Activated CD4-positive, alpha-beta memory T cell treated with anti-CD3 and anti-CD28 coated beads for 36 hours (primary cell): ENCODE measurements at regions of chr9 and their contacts with region 1.

Region 1: DNA sequence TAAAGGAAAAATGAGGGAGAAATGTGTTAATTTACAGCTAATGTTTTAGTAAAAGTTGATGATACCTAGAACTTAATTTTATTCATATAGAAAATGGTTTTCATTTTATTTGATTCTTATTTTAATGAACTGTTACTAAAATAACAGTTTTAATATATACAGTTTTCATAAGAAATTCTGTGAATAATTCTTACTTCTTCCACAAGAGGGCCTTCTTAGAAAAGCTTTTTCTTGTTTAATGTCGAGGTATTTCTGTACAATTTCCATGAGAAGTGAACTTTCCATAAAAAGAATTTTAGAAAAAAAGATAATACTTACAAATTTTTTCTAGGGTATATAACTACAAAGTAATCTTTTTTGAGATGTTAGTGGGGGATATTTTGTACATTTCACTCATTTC is 73.9 kb downstream of the KLF9 start:
- DNase-seq: no peak
- H3K4me3 Mint-ChIP-seq: no peak overlapping the region
- H3K27ac Mint-ChIP-seq: no peak overlapping the region
- H3K4me1 Mint-ChIP-seq: peaks cover 4% of the 10 kb centered on the region
- H3K27me3 Mint-ChIP-seq: no peaks in the 10 kb centered on the region

Region 2: GRCh38 chr9:70392189-70392588 is 51.6 kb after region 1 on chr9:
- CTCF ChIA-PET with region 1: interaction called, 12 read pairs
- POLR2A ChIA-PET with region 1: no interaction called
- intact Hi-C with region 1: no loop called
- DNase-seq: no peak
- H3K4me3 Mint-ChIP-seq: no peak overlapping the region
- H3K27ac Mint-ChIP-seq: no peak overlapping the region
- H3K4me1 Mint-ChIP-seq: peaks cover 78% of the 10 kb centered on the region
- H3K27me3 Mint-ChIP-seq: no peaks in the 10 kb centered on the region

Region 3: GRCh38 chr9:70406434-70406862 is 65.9 kb after region 1 on chr9:
- CTCF ChIA-PET with region 1: interaction called, 4 read pairs
- POLR2A ChIA-PET with region 1: no interaction called
- intact Hi-C with region 1: loop called (anchors 2 kb)
- DNase-seq: peak; percentile 69
- H3K4me3 Mint-ChIP-seq: peak overlapping the region; percentile 73
- H3K27ac Mint-ChIP-seq: peak overlapping the region; percentile 92
- H3K4me1 Mint-ChIP-seq: peaks cover 79% of the 10 kb centered on the region
- H3K27me3 Mint-ChIP-seq: no peaks in the 10 kb centered on the region

Region 4: GRCh38 chr9:70494221-70494620 is 153.6 kb after region 1 on chr9:
- CTCF ChIA-PET with region 1: interaction called, 3 read pairs
- POLR2A ChIA-PET with region 1: no interaction called
- intact Hi-C with region 1: loop called (anchors 10 kb)
- DNase-seq: no peak
- H3K4me3 Mint-ChIP-seq: no peak overlapping the region
- H3K27ac Mint-ChIP-seq: no peak overlapping the region
- H3K4me1 Mint-ChIP-seq: peaks cover 4% of the 10 kb centered on the region
- H3K27me3 Mint-ChIP-seq: peaks cover 4% of the 10 kb centered on the region

Region 5: GRCh38 chr9:72102520-72102919 is 1761.9 kb after region 1 on chr9:
- CTCF ChIA-PET with region 1: no interaction called
- POLR2A ChIA-PET with region 1: no interaction called
- intact Hi-C with region 1: no loop called
- DNase-seq: no peak
- H3K4me3 Mint-ChIP-seq: no peak overlapping the region
- H3K27ac Mint-ChIP-seq: no peak overlapping the region
- H3K4me1 Mint-ChIP-seq: no peaks in the 10 kb centered on the region
- H3K27me3 Mint-ChIP-seq: no peaks in the 10 kb centered on the region